GM23248 (cell line): ENCODE measurements at regions of chr15 and their contacts with region 1.

Region 1: DNA sequence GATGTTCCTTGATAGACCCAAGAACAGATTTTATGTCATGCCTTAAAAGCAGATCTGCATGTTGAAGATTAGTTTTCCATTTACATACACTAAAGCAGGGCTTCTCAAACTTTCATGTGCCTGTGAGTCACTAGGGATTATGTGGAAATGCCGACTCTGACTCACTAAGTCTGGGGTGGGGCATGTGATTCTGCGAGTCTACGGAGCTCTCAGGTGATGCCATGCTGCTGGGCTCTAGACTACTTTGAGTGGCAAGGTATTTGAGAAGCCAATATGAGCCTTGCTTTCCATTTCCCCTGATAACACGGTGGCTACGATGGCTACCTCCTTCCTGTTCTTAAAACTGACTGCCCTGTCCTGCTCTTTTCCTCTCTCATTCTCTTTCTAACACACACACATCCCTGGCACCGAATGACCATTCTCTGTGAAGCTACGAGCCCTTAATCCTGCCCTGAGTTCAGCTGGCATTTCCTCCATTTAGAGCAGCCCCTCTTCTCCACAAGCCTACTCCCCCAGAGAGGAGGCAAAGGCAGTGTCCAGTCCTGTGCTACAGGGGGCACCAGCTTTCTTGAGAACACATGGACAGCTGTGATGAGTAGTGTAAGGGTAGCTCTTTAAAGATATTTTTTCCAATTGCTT is 39.7 kb upstream of the PYGO1 start:
- DNase-seq: peak; percentile 93
- H3K4me3 ChIP-seq: no peak overlapping the region
- H3K27ac ChIP-seq: no peak overlapping the region
- H3K4me1 ChIP-seq: no peaks in the 10 kb centered on the region
- H3K27me3 ChIP-seq: no peaks in the 10 kb centered on the region; the same call in 1 of the 2 replicates

Region 2: GRCh38 chr15:55526559-55527036 is 101.3 kb before region 1 on chr15:
- in situ Hi-C with region 1: loop called (anchors 10 kb)
- DNase-seq: peak; percentile 79
- H3K4me3 ChIP-seq: no peak overlapping the region
- H3K27ac ChIP-seq: no peak overlapping the region
- H3K4me1 ChIP-seq: peaks cover 6% of the 10 kb centered on the region
- H3K27me3 ChIP-seq: no peaks in the 10 kb centered on the region

Region 3: DNA sequence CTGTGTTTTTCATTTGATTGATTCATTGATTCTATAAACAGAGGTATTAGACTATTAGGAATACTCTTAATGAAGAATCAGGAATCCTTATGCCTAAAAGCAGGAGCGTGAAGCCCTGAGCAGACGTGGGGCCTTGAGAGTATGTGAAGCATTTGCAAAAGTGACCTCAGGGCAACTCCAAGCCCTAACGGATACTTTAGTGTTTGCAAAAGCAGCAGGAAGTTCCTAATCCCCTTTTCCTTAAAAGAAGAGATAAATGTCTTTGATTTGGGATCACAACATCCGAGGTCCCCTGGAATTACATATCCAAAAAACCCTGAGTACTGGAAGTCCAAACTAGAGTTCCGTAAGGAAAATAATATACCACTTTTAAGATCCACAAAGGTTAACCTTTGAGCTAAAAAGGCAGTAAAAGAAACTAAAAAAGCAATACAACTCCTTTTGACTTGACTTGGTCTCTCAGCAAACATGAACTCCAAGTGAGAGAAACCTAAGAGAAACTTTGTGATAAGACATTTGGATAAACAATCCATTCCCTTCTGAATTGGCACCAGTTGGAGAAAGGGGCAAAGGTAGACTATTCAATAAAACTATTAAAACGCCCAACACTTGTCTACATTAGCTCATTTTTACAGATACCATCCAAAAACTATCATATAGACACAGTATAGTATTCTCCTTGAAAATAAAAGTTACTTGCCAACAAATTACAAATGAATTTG is 87.7 kb after region 1 on chr15:
- in situ Hi-C with region 1: no loop called
- DNase-seq: no peak
- H3K4me3 ChIP-seq: no peak overlapping the region
- H3K27ac ChIP-seq: no peak overlapping the region
- H3K4me1 ChIP-seq: no peaks in the 10 kb centered on the region
- H3K27me3 ChIP-seq: peaks cover 19% of the 10 kb centered on the region